ENCODE measurements at regions of chr11 and their contacts with region 1.

Region 1: GRCh38 chr11:10792398-10792975 is 16.2 kb downstream of the EIF4G2 start:
- DNase-seq: peak; percentile 90
- H3K4me3 Mint-ChIP-seq: no peak overlapping the region
- H3K27ac Mint-ChIP-seq: no peak overlapping the region
- H3K4me1 Mint-ChIP-seq: peaks cover 14% of the 10 kb centered on the region
- H3K27me3 Mint-ChIP-seq: no peaks in the 10 kb centered on the region

Region 2: DNA sequence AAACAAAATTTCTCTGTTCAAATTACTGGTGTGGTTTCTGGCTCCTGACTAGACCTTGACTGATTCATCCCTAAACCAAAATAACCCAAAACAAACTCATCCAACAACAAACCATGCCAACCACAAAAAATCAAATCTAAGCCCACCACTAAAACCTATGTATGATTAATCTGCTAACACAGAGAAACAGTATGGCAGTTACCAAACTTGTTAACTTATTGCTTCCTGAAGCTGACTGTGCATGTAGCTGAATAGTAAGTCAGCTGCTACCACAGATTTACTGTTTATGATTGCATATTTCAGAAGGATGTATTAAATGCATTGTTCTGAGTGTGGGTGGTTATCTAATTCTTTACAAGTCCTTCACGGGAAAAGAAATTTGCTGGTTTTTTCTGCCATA is 897.5 kb before region 1 on chr11:
- CTCF ChIA-PET with region 1: no interaction called
- intact Hi-C with region 1: no loop called
- DNase-seq: no peak
- H3K4me3 Mint-ChIP-seq: no peak overlapping the region
- H3K27ac Mint-ChIP-seq: no peak overlapping the region
- H3K4me1 Mint-ChIP-seq: no peaks in the 10 kb centered on the region
- H3K27me3 Mint-ChIP-seq: no peaks in the 10 kb centered on the region

Region 3: DNA sequence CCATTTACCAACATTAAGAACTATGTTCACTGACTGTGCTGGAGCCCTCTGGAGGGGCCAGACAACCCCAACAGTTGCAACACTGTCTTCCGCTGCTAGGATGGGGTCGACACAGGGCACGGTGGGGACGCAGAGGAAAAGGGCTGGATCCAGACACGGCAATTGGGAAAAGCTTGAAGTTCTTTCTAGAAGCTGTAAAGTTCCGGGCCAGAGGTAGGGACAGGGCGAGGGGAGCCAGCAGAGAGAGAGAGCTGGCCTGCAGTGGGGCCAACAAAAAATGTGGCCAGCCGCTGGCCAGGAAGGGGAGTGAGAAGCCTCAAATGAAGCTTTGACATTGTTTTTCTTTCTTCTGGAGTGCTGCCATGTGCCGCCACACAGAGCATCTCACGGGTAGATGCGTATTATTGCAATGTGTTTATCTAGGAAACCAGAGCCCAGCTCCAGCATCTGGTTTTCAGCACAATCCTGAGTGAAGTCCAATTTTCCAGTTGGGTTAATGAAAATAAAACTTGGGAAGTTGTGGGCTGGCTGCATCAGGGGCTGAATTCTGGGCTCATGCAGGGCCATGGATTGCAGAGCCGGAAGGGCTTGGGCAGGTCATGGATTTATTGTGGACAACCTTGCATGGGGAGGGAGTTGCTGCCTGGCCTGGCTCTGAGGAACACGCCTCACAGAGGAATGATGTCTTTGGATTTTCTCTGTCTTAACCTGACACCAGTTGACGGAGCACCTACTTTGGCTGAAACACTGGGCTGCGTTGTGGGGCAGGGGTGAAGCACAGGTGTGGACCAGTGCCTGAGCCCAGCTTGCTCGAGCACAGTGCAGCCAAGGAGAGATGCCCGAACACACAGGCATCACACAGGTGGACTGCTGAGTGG is 405.0 kb before region 1 on chr11:
- CTCF ChIA-PET with region 1: no interaction called
- intact Hi-C with region 1: no loop called
- DNase-seq: no peak
- H3K4me3 Mint-ChIP-seq: no peak overlapping the region
- H3K27ac Mint-ChIP-seq: no peak overlapping the region
- H3K4me1 Mint-ChIP-seq: no peaks in the 10 kb centered on the region
- H3K27me3 Mint-ChIP-seq: peaks cover 24% of the 10 kb centered on the region

Region 4: DNA sequence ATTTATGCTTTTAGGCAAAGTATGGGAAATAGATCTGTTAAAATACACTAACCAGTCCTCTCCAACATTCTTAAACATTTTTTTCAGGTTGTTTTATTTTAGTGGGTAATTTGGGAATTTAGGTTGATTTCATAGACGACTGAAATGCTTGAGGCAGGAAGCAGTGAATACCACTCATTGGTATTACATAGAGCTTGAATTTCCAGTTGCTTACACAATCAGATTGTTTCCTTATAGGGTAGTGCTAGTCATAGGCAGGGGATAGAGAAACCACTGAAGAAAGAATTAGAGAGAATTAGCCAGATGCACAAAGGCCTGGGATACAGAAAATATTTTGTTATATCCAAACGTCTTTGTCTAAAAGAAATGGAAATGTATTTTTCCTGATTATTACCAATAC is 200.2 kb before region 1 on chr11:
- CTCF ChIA-PET with region 1: no interaction called
- intact Hi-C with region 1: no loop called
- DNase-seq: no peak
- H3K4me3 Mint-ChIP-seq: no peak overlapping the region
- H3K27ac Mint-ChIP-seq: no peak overlapping the region
- H3K4me1 Mint-ChIP-seq: no peaks in the 10 kb centered on the region
- H3K27me3 Mint-ChIP-seq: no peaks in the 10 kb centered on the region

Region 5: DNA sequence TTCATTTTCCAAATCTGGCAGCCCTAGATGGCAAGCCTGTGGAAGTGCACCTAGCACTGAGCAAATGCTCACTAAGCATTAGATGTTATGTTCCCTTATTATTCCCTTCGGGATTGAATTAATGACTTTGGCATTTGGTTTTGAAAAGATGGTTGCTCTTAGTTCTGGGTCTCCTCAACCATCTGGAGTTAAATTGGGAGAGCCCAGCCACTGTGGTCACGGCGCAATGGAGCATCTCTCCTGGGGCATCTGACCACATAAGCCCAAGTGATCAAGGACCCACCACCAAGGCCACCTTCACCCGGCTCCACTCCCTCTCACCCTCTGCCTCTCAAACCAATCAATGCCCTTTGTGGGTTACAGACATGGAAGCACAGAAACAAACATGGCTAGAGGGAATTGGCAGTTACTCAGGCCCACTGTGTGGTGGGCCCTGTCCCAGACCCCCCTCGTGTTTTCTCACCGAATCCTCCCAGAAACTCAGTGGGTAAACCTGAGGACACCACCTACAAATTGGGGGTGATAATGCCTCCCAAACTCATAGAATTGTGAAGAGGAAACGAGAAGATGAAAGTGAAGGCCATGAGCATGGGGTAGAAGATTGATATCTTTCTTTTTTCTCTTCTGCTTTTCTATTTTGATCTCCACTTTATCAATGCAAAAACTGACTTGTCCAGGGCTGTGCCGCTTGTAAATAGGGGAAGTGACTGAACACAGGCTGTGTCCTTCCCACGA is 151.1 kb before region 1 on chr11:
- CTCF ChIA-PET with region 1: no interaction called
- intact Hi-C with region 1: no loop called
- DNase-seq: no peak
- H3K4me3 Mint-ChIP-seq: no peak overlapping the region
- H3K27ac Mint-ChIP-seq: no peak overlapping the region
- H3K4me1 Mint-ChIP-seq: no peaks in the 10 kb centered on the region
- H3K27me3 Mint-ChIP-seq: no peaks in the 10 kb centered on the region

Region 6: GRCh38 chr11:10803676-10804075 is 11.2 kb after region 1 on chr11:
- CTCF ChIA-PET with region 1: interaction called, 32 read pairs
- intact Hi-C with region 1: no loop called
- DNase-seq: no peak
- H3K4me3 Mint-ChIP-seq: no peak overlapping the region
- H3K27ac Mint-ChIP-seq: peak overlapping the region; percentile 10
- H3K4me1 Mint-ChIP-seq: peaks cover 74% of the 10 kb centered on the region
- H3K27me3 Mint-ChIP-seq: no peaks in the 10 kb centered on the region

Region 7: DNA sequence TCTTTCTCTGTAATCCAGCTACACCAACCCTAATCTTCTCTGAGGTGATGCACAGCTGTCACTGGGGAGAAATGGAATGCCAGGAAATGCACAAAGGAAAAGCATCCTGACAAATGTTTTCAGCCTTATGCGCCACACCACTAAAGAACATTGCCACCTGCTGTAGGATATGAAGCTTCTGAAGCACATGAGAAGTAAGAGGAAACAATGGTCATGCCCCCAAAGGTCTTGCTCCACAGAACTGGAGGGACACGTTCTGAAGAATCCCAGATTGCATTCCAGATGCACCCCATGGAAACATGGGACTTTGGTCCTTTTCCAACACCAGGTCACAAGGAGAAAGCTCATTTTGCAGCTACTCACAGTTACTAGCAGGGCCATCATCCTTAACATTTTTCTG is 114.0 kb after region 1 on chr11:
- CTCF ChIA-PET with region 1: interaction called, 6 read pairs
- intact Hi-C with region 1: loop called (anchors 1 kb)
- DNase-seq: no peak
- H3K4me3 Mint-ChIP-seq: no peak overlapping the region
- H3K27ac Mint-ChIP-seq: no peak overlapping the region
- H3K4me1 Mint-ChIP-seq: no peaks in the 10 kb centered on the region
- H3K27me3 Mint-ChIP-seq: no peaks in the 10 kb centered on the region

Region 8: DNA sequence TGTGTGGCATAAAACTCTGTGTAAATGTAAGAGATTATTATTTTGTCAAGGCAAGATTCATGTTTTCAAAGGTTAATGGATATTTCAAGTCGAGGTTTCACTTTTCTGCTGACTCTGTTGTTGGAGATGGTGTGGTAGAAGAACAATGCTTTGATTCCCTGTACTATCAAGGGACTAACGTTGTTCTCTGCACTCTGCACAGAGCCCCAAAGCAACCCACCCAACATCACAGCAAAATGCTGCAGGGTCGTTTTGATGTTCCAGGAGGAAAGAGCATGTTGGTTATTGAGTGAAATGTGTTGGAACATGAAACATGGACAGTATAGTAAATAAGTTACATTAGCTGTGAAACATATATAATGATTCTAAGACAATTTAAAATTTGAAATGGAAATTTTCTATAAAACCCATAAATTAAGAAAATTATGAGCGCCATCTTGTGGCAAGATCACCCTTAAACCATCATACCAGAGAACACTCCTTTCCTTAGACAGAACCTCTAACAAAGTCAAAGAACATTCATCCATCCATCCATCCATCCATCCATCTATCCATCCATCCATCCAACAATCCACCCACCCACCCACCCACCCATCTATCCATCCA is 229.7 kb after region 1 on chr11:
- CTCF ChIA-PET with region 1: interaction called, 26 read pairs
- intact Hi-C with region 1: loop called (anchors 1 kb)
- DNase-seq: peak; percentile 34
- H3K4me3 Mint-ChIP-seq: no peak overlapping the region
- H3K27ac Mint-ChIP-seq: no peak overlapping the region
- H3K4me1 Mint-ChIP-seq: no peaks in the 10 kb centered on the region
- H3K27me3 Mint-ChIP-seq: no peaks in the 10 kb centered on the region

Region 9: GRCh38 chr11:11265994-11266606 is 473.6 kb after region 1 on chr11:
- CTCF ChIA-PET with region 1: no interaction called
- intact Hi-C with region 1: loop called (anchors 5 kb)
- DNase-seq: peak; percentile 79
- H3K4me3 Mint-ChIP-seq: no peak overlapping the region
- H3K27ac Mint-ChIP-seq: no peak overlapping the region
- H3K4me1 Mint-ChIP-seq: no peaks in the 10 kb centered on the region
- H3K27me3 Mint-ChIP-seq: no peaks in the 10 kb centered on the region

Measured in activated naive CD4-positive, alpha-beta T cell treated with anti-CD3 and anti-CD28 coated beads for 36 hours (primary cell).